Lower leg skin (tissue), 4 donors: ENCODE measurements at regions of chr6 and their contacts with region 1.

Region 1: GRCh38 chr6:26068036-26068435 is 19.2 kb upstream of the HFE start:
- DNase-seq: no peak
- H3K4me3 ChIP-seq: no peak overlapping the region
- CTCF ChIP-seq: no peak
- POLR2A ChIP-seq: no peak

Region 2: GRCh38 chr6:26103770-26104456 is 35.9 kb after region 1 on chr6:
- intact Hi-C with region 1: loop called (anchors 1 kb)
- DNase-seq: peak; percentile 92 to 98
- H3K4me3 ChIP-seq: no peak overlapping the region
- CTCF ChIP-seq: no peak
- POLR2A ChIP-seq: peak in 1 of 2 donors; percentile 58